ENCODE measurements at regions of chr12 and their contacts with region 1.

Region 1: DNA sequence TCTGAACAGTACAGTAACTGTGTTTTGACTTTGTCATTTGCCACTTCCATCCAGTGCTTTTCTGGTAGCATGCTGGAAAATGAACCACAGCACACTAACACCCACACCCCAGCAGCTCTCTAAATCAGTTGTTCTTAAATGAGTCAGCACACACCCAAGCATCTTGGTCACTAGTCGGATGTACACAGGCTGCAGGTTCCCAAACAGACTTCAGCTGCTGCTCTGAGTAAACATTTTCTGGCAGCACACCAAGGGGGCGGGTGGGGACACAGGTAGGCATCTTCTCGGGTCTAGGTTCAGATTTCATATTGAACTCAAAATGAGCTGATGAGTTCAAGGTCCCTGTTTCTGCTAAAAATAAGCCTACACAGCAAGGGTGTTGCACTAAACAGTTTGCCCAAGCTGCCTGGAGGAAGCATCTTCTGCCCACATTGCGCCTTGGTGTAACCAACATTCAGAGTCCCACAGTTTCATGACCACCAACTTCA is 39.8 kb downstream of the IFNG start:
- DNase-seq: peak in 6 of 9 experiments; percentile 31 to 77 (median 62)
- ATAC-seq: peak; percentile 77
- H3K4me3 ChIP-seq: peak overlapping the region in 1 of 2 experiments; percentile 1
- H3K4me3 Mint-ChIP-seq: no peak overlapping the region
- H3K27ac ChIP-seq: peak overlapping the region in 1 of 2 experiments; percentile 73
- H3K27ac Mint-ChIP-seq: peak overlapping the region; percentile 69
- H3K4me1 ChIP-seq: peaks cover 12% of the 10 kb centered on the region
- H3K4me1 Mint-ChIP-seq: peaks cover 34% of the 10 kb centered on the region
- H3K27me3 ChIP-seq: no peaks in the 10 kb centered on the region
- H3K27me3 Mint-ChIP-seq: no peaks in the 10 kb centered on the region
- CTCF ChIP-seq: no peak

Region 2: DNA sequence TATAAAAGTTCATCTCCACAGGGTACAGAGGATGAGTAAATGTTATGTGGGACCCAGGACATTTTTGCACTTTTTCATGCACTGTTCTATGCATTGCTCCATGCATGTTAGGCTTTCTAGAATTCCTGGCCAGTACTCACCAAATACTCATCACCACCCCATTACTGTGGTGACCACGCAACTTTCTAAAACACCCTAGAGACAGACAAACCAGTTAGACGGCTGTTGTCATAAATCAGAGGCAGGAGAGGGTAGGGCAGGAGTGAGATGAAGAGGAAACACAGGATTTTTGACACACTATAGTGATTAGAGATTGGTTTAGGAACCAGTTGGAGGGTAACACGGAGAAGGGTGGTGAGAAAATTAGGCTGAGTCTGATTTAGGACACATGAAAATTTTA is 19.5 kb before region 1 on chr12:
- CTCF ChIA-PET with region 1: no interaction called
- POLR2A ChIA-PET with region 1: no interaction called
- intact Hi-C with region 1: no loop called
- DNase-seq: no peak
- ATAC-seq: no peak
- H3K4me3 ChIP-seq: no peak overlapping the region
- H3K4me3 Mint-ChIP-seq: no peak overlapping the region
- H3K27ac ChIP-seq: no peak overlapping the region
- H3K27ac Mint-ChIP-seq: no peak overlapping the region
- H3K4me1 ChIP-seq: no peaks in the 10 kb centered on the region
- H3K4me1 Mint-ChIP-seq: no peaks in the 10 kb centered on the region
- H3K27me3 ChIP-seq: no peaks in the 10 kb centered on the region
- H3K27me3 Mint-ChIP-seq: no peaks in the 10 kb centered on the region
- CTCF ChIP-seq: no peak

Region 3: GRCh38 chr12:68137335-68137830 is 17.6 kb after region 1 on chr12:
- CTCF ChIA-PET with region 1: interaction called, 3 read pairs
- POLR2A ChIA-PET with region 1: interaction called, 4 read pairs
- intact Hi-C with region 1: loop called in 1 of 2 experiments (anchors 1 kb)
- DNase-seq: peak in 1 of 9 experiments; percentile 34
- ATAC-seq: peak; percentile 20
- H3K4me3 ChIP-seq: no peak overlapping the region
- H3K4me3 Mint-ChIP-seq: no peak overlapping the region
- H3K27ac ChIP-seq: peak overlapping the region in 1 of 2 experiments; percentile 41
- H3K27ac Mint-ChIP-seq: peak overlapping the region; percentile 38
- H3K4me1 ChIP-seq: peaks cover 21% of the 10 kb centered on the region
- H3K4me1 Mint-ChIP-seq: peaks cover 44% of the 10 kb centered on the region
- H3K27me3 ChIP-seq: no peaks in the 10 kb centered on the region
- H3K27me3 Mint-ChIP-seq: no peaks in the 10 kb centered on the region
- CTCF ChIP-seq: no peak